CD8-positive, alpha-beta memory T cell (primary cell): ENCODE measurements at regions of chr10 and their contacts with region 1.

Region 1: DNA sequence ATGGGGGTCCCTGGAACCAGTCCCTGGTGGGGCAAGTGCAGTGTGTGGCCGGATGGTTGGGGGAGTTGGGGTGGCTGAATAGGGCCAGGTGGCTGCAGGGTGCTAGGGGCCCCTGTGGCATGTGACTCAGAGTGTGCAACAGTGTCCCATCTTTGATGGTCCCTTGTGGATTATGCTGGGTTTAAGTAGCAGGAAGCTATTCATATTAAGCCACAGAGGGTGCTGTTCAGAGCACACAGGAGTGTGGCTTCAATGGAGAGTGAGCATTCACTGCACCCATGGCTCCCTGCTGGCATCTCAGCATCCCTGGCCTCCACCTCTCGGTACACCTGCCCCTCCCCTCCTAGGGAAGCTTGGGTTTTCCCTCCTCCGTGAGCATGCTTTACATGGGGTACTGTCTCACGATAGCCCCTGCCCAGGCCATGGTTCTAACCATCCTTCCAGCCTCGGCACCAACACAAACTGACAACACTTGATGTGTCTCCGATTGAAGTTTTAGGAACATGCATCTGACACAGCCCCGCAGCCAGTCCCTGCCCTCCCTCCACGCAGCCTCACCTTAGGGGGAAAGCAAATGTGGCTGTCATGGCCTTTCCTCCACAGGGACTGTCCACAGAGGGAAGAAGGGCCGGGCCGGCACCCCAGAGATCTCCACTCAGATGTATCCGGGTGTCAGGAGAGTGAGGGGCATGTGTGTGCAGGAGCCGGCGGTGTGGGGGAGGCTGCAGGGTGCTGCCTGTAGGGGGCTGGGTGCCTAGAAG is 30.4 kb upstream of the PPIF start:
- DNase-seq: no peak
- H3K4me3 ChIP-seq: peak overlapping the region; percentile 38
- H3K4me3 Mint-ChIP-seq: peak overlapping the region; percentile 66 to 89 (median 75)
- H3K27ac ChIP-seq: no peak overlapping the region
- H3K27ac Mint-ChIP-seq: peak overlapping the region in 7 of 8 donors; percentile 36 to 90 (median 56)
- H3K4me1 ChIP-seq: peaks cover 60% of the 10 kb centered on the region
- H3K4me1 Mint-ChIP-seq: peaks cover 62 to 65% (median 65%) of the 10 kb centered on the region in 3 donors
- H3K27me3 ChIP-seq: no peaks in the 10 kb centered on the region
- H3K27me3 Mint-ChIP-seq: peaks cover 0 to 4% of the 10 kb centered on the region in 2 donors

Region 2: DNA sequence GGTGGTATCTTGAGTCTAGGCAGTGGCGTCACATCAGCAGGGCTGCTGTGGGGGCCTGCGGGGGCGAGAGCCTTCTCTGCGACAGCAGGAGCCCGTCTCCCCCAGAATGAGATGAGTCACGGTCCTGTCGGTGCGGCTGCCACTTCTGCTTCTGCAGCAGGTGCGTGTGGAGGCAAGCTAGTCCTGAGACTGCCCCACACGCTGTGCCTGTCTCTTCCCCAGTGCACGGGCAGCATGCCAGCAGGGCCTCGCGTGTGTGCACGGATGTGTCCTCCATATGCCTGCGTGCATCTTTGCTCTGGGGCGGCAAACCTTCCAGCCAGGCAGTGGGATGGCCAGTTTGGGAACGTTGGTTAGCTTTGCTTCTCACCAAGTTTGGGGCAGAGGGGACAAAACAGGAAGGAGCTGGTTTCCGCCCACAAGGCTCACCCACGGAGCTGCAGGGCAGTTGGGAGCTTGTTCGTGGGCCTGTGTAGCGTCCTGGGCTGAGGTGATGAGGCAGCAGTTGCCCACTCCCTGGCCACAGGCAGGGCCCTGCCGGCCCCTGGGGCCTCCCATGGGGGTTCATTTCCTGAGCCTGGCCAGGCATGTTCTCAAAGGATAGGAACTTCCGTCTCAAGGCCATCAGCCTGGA is 30.4 kb before region 1 on chr10:
- CTCF ChIA-PET with region 1: interaction called, 11 read pairs
- POLR2A ChIA-PET with region 1: interaction called, 7 read pairs
- DNase-seq: peak; percentile 63 to 95 (median 73)
- H3K4me3 ChIP-seq: peak overlapping the region; percentile 41
- H3K4me3 Mint-ChIP-seq: peak overlapping the region; percentile 7 to 89 (median 82)
- H3K27ac ChIP-seq: peak overlapping the region; percentile 36
- H3K27ac Mint-ChIP-seq: peak overlapping the region; percentile 93 to 100 (median 96)
- H3K4me1 ChIP-seq: peaks cover 47% of the 10 kb centered on the region
- H3K4me1 Mint-ChIP-seq: peaks cover 48 to 68% (median 53%) of the 10 kb centered on the region in 3 donors
- H3K27me3 ChIP-seq: no peaks in the 10 kb centered on the region
- H3K27me3 Mint-ChIP-seq: no peaks in the 10 kb centered on the region

Region 3: GRCh38 chr10:79333478-79333877 is 16.6 kb after region 1 on chr10:
- CTCF ChIA-PET with region 1: interaction called, 10 read pairs
- POLR2A ChIA-PET with region 1: no interaction called
- DNase-seq: no peak
- H3K4me3 ChIP-seq: no peak overlapping the region
- H3K4me3 Mint-ChIP-seq: no peak overlapping the region
- H3K27ac ChIP-seq: no peak overlapping the region
- H3K27ac Mint-ChIP-seq: peak overlapping the region in 1 of 8 donors; percentile 38
- H3K4me1 ChIP-seq: peaks cover 10% of the 10 kb centered on the region
- H3K4me1 Mint-ChIP-seq: peaks cover 9 to 16% (median 11%) of the 10 kb centered on the region in 3 donors
- H3K27me3 ChIP-seq: no peaks in the 10 kb centered on the region
- H3K27me3 Mint-ChIP-seq: peaks cover 0 to 2% of the 10 kb centered on the region in 2 donors

Region 4: DNA sequence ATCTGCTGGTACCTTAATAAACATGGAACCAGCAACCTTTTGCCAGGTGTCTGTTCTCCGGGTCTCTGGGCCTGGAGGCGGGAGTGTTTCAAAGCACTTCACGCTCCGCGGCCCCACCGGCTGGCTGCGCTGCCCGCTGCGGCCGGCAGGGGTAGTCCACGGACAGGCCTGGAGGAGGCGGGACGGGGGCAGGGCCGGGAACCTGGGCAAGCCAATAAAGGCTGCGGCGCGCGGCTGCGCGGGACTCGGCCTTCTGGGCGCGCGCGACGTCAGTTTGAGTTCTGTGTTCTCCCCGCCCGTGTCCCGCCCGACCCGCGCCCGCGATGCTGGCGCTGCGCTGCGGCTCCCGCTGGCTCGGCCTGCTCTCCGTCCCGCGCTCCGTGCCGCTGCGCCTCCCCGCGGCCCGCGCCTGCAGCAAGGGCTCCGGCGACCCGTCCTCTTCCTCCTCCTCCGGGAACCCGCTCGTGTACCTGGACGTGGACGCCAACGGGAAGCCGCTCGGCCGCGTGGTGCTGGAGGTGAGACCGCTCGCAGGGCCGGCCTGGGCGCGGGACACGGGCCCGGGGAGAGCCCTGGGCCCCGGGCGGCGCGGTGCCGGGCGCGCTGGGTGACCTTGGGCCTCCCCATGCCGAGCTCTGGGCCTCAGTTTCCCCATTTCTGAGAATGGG is 30.5 kb after region 1 on chr10 and contains the start of gene PPIF:
- CTCF ChIA-PET with region 1: interaction called, 37 read pairs
- POLR2A ChIA-PET with region 1: interaction called, 12 read pairs
- DNase-seq: peak; percentile 88 to 92 (median 89)
- H3K4me3 ChIP-seq: peak within 1 kb of the TSS; percentile 56
- H3K4me3 Mint-ChIP-seq: peak within 1 kb of the TSS; percentile 77 to 91 (median 82)
- H3K27ac ChIP-seq: peak within 1 kb of the TSS; percentile 80
- H3K27ac Mint-ChIP-seq: peak within 1 kb of the TSS; percentile 78 to 98 (median 92)
- H3K4me1 ChIP-seq: peaks cover 33% of the 10 kb centered on the region
- H3K4me1 Mint-ChIP-seq: peaks cover 25 to 46% (median 28%) of the 10 kb centered on the region in 3 donors
- H3K27me3 ChIP-seq: no peaks in the 10 kb centered on the region
- H3K27me3 Mint-ChIP-seq: no peaks in the 10 kb centered on the region
- total RNA-seq, gene PPIF: 173 to 181 TPM